Sciatic nerve (tissue), 2 donors: ENCODE measurements at regions of chr2 and their contacts with region 1.

Region 1: DNA sequence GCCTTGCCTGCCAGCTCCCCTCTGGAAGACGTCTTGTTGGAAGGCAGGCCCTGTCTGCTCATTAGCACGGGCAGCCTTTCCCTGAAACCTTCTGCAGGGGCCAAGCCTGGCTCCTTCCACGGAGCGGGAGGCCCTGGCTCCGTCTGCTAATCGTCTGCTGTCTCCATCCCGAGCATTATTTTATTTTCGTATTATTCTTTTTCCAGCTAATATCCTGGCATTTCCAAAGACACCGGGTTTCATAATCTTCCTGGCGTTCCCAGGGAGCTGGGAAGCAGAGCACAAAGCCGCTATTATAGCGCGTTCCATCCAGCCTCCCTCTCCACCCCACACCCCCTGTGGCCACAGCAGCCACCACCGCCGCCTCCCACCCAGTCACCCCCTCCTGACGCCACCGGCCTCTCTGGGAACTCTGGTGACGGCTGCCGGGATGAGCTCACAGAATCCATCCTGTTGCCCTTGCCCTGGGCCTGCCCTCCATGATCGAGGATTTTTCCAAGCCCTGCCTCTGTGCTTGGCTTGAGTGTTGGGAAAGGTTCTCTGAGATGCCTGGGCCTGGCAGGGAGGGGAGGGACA is 125.5 kb downstream of the DYSF start:
- DNase-seq: peak; percentile 80
- ATAC-seq: peak; percentile 90

Region 2: GRCh38 chr2:71372042-71372441 is 206.8 kb before region 1 on chr2:
- intact Hi-C with region 1: no loop called
- DNase-seq: no peak
- ATAC-seq: no peak

Region 3: GRCh38 chr2:71385012-71385411 is 193.8 kb before region 1 on chr2:
- intact Hi-C with region 1: no loop called
- DNase-seq: no peak
- ATAC-seq: no peak

Region 4: DNA sequence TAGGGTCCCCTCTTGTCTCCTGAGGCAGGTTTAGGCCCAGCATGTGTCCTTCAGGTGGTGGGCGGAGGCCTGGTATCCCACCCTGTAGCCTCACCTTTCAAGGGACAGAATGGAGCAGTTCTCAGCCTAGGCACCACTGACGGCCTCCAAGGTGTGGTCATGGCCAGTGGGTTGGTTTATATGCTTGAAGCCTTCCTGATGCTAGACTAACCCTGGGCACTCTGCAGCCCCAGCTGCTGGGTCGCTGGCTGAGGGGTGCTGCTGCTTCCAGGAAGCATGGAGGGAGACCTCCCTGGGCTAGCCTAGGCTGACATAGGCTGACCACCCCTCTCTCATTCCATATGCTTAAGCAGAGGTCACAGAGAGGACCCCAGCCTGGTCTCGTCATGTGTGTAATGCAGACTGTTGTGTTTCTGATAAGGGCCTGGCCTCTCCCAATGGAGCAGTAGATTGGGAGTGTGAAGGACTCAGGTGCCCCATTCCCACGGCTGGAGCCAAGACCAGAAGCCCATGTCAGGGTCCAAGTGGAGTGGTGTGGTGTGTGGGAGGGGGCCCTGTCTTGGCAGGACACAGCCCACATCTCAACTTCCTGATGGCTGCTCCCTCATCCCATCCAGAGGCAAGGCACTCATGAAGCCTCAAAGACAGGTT is 81.1 kb after region 1 on chr2:
- intact Hi-C with region 1: loop called (anchors 2 kb)
- DNase-seq: no peak
- ATAC-seq: no peak

Region 5: GRCh38 chr2:71716781-71717624 is 138.1 kb after region 1 on chr2:
- intact Hi-C with region 1: no loop called
- DNase-seq: peak; percentile 72
- ATAC-seq: peak; percentile 55